IMR-90 (cell line): ENCODE measurements at regions of chr5 and their contacts with region 1.

Region 1: GRCh38 chr5:40991168-40991980 is 79.8 kb downstream of the MROH2B start:
- DNase-seq: peak; percentile 86
- ATAC-seq: peak; percentile 96
- H3K4me3 ChIP-seq: no peak overlapping the region
- H3K27ac ChIP-seq: peak overlapping the region; percentile 59
- H3K4me1 ChIP-seq: peaks cover 14% of the 10 kb centered on the region; the same call in 1 of the 2 replicates
- H3K27me3 ChIP-seq: no peaks in the 10 kb centered on the region
- CTCF ChIP-seq: no peak
- POLR2A ChIP-seq: no peak
- RAD21 ChIP-seq: no peak

Region 2: DNA sequence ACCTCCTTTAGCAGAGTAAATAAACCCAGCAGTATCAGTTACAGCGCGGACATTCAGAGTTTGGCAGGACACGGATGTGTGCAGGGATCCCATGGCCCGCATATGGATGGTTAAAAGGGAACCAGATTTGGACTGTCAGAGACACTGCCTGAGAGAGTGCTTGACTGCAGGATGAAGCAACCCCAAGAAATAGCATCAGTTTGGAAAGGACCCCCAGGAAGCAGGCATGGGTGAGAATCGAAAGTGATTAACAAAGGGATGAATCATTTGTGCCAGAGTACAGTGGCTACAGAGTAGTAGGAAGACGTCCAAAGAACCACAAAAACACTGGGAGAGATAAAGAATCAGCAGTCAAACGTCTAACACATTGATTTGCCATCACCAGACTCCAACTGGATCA is 76.5 kb before region 1 on chr5:
- CTCF ChIA-PET with region 1: no interaction called
- POLR2A ChIA-PET with region 1: no interaction called
- dilution Hi-C with region 1: no loop called
- in situ Hi-C with region 1: no loop called
- intact Hi-C with region 1: loop called (anchors 5 kb)
- DNase-seq: peak; percentile 55
- ATAC-seq: peak; percentile 65
- H3K4me3 ChIP-seq: peak overlapping the region; percentile 6; the same call in 1 of the 2 replicates
- H3K27ac ChIP-seq: no peak overlapping the region
- H3K4me1 ChIP-seq: peaks cover 3% of the 10 kb centered on the region
- H3K27me3 ChIP-seq: no peaks in the 10 kb centered on the region
- CTCF ChIP-seq: no peak
- POLR2A ChIP-seq: no peak
- RAD21 ChIP-seq: no peak

Region 3: DNA sequence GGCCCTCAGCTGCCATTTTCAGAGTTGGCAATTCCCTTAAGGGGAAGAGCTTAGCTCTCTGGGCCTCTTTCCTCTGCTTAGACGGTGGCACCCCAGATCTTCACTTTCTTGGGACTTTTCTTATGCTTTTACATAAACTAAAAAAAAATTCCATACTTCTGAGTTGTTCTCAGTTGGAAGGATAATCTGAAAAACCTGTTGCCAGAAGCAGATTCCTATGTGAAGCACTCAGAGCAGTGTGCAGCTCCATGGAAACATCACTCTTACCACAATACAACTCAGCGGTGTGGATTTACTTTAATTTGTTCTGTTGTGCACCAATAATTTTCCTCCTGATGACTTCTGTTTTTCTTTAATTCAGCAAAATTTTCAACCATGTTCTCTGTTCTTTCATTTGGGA is 123.9 kb after region 1 on chr5:
- CTCF ChIA-PET with region 1: no interaction called
- POLR2A ChIA-PET with region 1: no interaction called
- dilution Hi-C with region 1: no loop called
- in situ Hi-C with region 1: no loop called
- intact Hi-C with region 1: loop called (anchors 2 kb)
- DNase-seq: peak; percentile 94
- ATAC-seq: peak; percentile 75
- H3K4me3 ChIP-seq: no peak overlapping the region
- H3K27ac ChIP-seq: peak overlapping the region; percentile 97
- H3K4me1 ChIP-seq: peaks cover 26% of the 10 kb centered on the region
- H3K27me3 ChIP-seq: no peaks in the 10 kb centered on the region
- CTCF ChIP-seq: no peak
- POLR2A ChIP-seq: no peak
- RAD21 ChIP-seq: no peak

Region 4: DNA sequence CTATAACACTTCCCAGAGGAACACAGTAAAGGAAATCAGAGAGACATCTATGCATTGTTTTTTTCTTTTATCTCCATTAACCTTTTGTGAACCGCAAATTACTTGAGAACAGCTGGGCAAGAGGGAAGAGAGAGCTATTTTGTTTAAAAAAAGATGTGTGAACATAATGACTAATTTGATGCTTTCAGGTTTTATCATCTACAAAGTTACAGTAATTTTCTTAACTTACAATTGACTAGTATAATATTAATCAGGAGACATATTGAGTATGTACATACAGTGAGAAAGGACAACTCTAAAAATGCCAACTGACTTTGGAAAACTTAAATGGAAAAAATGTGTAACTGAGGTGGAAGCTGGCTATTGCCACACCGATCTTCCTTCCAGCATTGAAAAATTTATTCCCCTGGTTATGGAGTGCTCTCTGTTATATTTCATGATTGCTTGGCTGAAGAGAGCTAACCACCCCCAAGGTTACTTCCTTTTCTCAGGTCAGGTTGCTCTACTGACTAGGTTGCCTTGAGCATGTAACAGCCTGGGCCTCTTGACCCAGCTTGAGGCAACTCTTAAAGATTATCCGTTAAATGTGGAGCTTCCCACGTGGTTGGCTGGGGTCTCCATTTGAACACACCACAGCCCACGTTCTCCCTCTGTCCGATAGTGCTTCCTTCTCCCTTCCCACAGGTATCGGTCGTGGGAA is 284.6 kb after region 1 on chr5:
- CTCF ChIA-PET with region 1: no interaction called
- POLR2A ChIA-PET with region 1: no interaction called
- dilution Hi-C with region 1: no loop called
- in situ Hi-C with region 1: no loop called
- intact Hi-C with region 1: no loop called
- DNase-seq: no peak
- ATAC-seq: no peak
- H3K4me3 ChIP-seq: no peak overlapping the region
- H3K27ac ChIP-seq: no peak overlapping the region
- H3K4me1 ChIP-seq: peaks cover 6% of the 10 kb centered on the region; the same call in 1 of the 2 replicates
- H3K27me3 ChIP-seq: no peaks in the 10 kb centered on the region
- CTCF ChIP-seq: no peak
- POLR2A ChIP-seq: no peak
- RAD21 ChIP-seq: no peak

Region 5: DNA sequence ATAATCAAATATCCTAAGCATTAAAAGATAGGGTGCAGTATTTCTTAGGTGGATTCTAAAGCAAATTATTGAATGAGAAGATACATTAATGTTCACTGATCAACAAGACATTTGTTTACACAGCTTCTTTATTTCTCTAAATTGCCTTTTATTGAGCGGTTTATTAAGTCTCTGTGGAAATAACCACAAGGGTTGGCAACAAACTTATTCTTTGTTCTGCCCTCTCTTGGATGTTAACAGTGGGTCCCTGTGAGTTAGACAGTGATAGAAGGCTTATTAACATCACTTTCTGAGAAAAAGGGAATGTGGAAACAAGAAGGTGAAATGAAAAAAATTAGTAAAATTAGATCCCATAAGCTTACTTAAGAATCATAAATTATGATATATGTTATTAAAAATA is 304.7 kb after region 1 on chr5:
- CTCF ChIA-PET with region 1: no interaction called
- POLR2A ChIA-PET with region 1: no interaction called
- dilution Hi-C with region 1: no loop called
- in situ Hi-C with region 1: no loop called
- intact Hi-C with region 1: no loop called
- DNase-seq: no peak
- ATAC-seq: no peak
- H3K4me3 ChIP-seq: no peak overlapping the region
- H3K27ac ChIP-seq: no peak overlapping the region
- H3K4me1 ChIP-seq: 0 out of 2 replicates have a peak, but pooled peaks cover 1% of the 10 kb centered on the region
- H3K27me3 ChIP-seq: peaks cover 2% of the 10 kb centered on the region; the same call in 1 of the 2 replicates
- CTCF ChIP-seq: no peak
- POLR2A ChIP-seq: no peak
- RAD21 ChIP-seq: no peak

Region 6: GRCh38 chr5:42021923-42022322 is 1030.5 kb after region 1 on chr5:
- CTCF ChIA-PET with region 1: no interaction called
- POLR2A ChIA-PET with region 1: no interaction called
- dilution Hi-C with region 1: no loop called
- in situ Hi-C with region 1: no loop called
- intact Hi-C with region 1: no loop called
- DNase-seq: no peak
- ATAC-seq: no peak
- H3K4me3 ChIP-seq: no peak overlapping the region
- H3K27ac ChIP-seq: no peak overlapping the region
- H3K4me1 ChIP-seq: no peaks in the 10 kb centered on the region
- H3K27me3 ChIP-seq: no peaks in the 10 kb centered on the region
- CTCF ChIP-seq: no peak
- POLR2A ChIP-seq: no peak
- RAD21 ChIP-seq: no peak